ENCODE measurements at regions of chr2 and their contacts with region 1.

Region 1: DNA sequence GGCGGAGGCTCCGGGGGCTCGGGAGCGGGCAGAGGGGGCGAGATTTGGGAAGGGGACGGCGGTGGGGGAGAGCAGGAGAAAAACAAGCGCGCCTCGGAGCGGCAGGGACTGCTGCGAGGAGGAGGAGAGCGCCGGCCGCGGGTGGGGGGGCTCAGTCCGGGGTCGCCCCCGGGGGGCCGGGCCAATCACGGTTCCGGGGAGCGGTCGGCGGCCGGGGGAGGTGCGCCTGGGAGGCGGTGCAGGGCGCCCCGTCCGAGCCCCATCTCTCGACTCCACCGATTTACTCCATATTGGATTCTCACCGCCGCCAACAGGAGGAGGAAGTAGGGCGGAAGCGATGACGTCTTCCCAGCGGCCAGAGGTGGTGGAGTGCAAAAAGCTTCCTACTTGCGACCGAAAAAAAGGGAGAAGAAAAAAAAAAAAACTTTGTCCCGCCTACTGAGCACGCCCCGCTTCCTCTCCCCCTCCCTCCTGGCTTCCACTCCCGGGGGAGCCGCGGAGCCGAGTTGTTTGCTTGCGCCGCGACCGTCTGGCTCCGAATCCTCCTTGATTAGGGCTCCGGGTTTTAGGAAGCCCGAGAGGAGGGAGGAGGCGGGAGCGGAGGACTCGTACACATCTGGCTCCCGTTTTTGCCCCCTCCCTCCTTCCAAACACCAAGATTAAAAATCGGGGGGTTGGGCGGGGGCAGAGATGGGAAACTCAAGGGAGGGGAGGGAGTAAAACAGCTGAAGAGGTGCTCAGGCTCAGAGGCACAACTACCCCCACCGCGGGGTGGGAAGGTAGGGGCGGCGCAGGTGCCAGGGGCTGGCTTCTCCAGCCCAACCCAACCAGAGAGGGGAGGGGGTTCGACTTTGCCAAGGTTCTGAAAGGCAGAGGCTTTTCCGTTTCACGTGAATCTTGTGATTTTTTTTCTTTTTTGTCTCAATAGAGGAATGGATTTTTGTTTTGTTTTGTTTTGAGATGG is at the start of gene SPRED2:
- DNase-seq: peak; percentile 97
- ATAC-seq: peak; percentile 53
- H3K4me3 ChIP-seq: peak within 1 kb of the TSS; percentile 88
- H3K27ac ChIP-seq: peak within 1 kb of the TSS; percentile 79
- H3K4me1 ChIP-seq: peaks cover 7% of the 10 kb centered on the region; the same call in 1 of the 2 replicates
- H3K27me3 ChIP-seq: no peaks in the 10 kb centered on the region
- CTCF ChIP-seq: 0 out of 2 replicates have a peak, but pooled peaks have one; percentile 6
- POLR2A ChIP-seq: peak; percentile 81
- RAD21 ChIP-seq: peak; percentile 26; the same call in 1 of the 2 replicates
- total RNA-seq, gene SPRED2: 4.7 and 4.8 TPM in 2 replicates

Region 2: DNA sequence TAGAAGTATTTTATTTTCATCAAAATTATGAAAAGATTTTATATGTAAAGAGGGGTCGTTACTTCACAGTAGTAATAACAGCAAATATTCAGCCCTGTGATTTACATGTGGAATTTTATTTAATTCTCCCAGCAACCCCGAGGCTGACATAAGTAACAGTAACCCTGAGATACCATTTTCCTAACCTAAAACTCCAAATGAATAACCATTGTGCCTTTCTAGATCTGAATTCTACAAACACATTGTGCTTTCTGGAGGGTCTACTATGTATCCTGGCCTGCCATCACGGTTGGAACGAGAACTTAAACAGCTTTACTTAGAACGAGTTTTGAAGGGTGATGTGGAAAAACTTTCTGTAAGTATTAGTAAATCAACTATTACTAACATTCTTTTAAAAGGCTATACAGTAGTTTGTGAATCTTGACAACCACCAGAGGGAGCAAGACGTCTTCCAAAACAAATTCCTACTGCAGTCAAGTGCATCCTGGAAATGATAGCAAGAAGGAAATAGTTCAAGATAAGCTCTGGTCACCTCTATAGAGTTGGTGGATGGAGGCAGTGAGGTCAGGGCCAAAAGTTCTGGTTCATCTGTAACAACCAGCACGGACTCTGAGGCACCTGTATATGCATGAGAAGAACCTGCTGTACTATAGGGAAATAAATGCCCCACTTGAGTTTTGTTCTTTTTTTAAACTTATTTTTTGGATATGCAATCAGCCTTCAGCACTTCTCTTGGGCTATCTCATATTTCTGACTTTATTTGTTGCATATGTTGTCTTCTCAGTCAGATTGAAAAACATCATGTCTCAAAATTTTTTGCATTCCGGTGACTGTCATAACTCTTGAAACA is 167.5 kb before region 1 on chr2:
- CTCF ChIA-PET with region 1: no interaction called
- POLR2A ChIA-PET with region 1: no interaction called
- dilution Hi-C with region 1: no loop called
- in situ Hi-C with region 1: loop called (anchors 5 kb)
- intact Hi-C with region 1: loop called (anchors 1 kb)
- DNase-seq: peak; percentile 91
- ATAC-seq: peak; percentile 83
- H3K4me3 ChIP-seq: no peak overlapping the region
- H3K27ac ChIP-seq: no peak overlapping the region
- H3K4me1 ChIP-seq: peaks cover 8% of the 10 kb centered on the region
- H3K27me3 ChIP-seq: no peaks in the 10 kb centered on the region
- CTCF ChIP-seq: peak; percentile 77
- POLR2A ChIP-seq: 0 out of 2 replicates have a peak, but pooled peaks have one; percentile 28
- RAD21 ChIP-seq: peak; percentile 87

Region 3: DNA sequence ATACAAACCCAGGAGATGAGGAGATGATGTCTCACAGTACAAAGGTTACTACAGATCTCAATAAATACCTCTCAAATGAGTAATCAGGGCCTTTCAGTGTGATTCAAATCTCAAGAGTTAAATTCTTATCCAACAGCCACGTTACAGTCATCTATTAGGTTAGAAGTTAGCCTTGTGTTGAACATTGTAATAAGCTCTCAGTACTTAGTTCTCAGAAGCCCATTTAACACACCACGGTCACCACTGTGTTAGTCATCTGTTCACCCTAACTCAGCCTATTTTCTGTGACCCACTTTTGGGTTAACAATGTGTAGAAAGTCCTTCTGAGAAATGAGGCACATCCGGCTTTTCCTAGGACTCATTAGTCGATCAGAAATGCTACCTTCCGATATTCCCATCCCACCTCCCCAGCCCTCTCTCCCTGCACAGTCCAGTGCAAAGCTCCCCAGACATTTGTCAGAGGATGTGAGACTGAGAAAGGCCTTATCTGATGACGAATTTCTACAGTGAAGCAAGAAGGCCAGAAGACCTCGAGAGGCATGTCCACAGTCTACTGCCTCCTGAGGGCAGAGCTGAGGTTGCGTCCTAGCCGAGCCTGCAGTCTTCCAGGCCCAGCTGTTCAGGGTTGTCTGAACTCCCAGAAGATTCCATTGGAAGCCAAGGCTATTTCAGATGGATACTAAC is 112.3 kb before region 1 on chr2:
- CTCF ChIA-PET with region 1: no interaction called
- POLR2A ChIA-PET with region 1: no interaction called
- dilution Hi-C with region 1: no loop called
- in situ Hi-C with region 1: no loop called
- intact Hi-C with region 1: loop called (anchors 1 kb)
- DNase-seq: peak; percentile 98
- ATAC-seq: peak; percentile 83
- H3K4me3 ChIP-seq: peak overlapping the region; percentile 23; the same call in 1 of the 2 replicates
- H3K27ac ChIP-seq: peak overlapping the region; percentile 88
- H3K4me1 ChIP-seq: peaks cover 22% of the 10 kb centered on the region
- H3K27me3 ChIP-seq: no peaks in the 10 kb centered on the region
- CTCF ChIP-seq: peak; percentile 71
- POLR2A ChIP-seq: peak; percentile 38
- RAD21 ChIP-seq: peak; percentile 67

Region 4: DNA sequence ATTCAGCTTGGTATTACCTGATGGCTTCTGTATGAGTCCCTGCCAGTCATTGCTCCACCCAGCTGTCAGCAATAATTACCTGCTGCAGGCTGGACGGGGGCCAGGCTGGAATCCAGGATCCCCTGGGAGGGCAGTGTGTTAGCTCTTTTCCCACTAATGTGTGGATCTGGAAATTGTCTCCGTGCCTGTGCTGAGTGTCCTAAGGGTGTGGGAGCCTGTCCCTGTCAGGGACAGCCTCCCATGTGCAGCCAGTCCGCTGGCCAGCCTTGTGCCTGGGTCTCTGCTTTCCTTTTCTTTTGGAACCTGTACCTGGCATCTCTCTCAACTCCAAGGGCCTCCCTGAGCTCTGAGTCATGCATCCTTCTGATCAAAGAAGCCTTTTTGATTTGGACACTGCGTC is 107.1 kb after region 1 on chr2:
- CTCF ChIA-PET with region 1: no interaction called
- POLR2A ChIA-PET with region 1: no interaction called
- dilution Hi-C with region 1: no loop called
- in situ Hi-C with region 1: loop called (anchors 5 kb)
- intact Hi-C with region 1: no loop called
- DNase-seq: no peak
- ATAC-seq: no peak
- H3K4me3 ChIP-seq: no peak overlapping the region
- H3K27ac ChIP-seq: no peak overlapping the region
- H3K4me1 ChIP-seq: 0 out of 2 replicates have a peak, but pooled peaks cover 2% of the 10 kb centered on the region
- H3K27me3 ChIP-seq: peaks cover 7% of the 10 kb centered on the region
- CTCF ChIP-seq: no peak
- POLR2A ChIP-seq: no peak
- RAD21 ChIP-seq: no peak

Measured in IMR-90 (cell line).